IMR-90 (cell line): ENCODE measurements at regions of chr3 and their contacts with region 1.

Region 1: GRCh38 chr3:56042326-56042951 is 425.8 kb downstream of the ERC2 start:
- DNase-seq: peak; percentile 61
- ATAC-seq: peak; percentile 97
- H3K4me3 ChIP-seq: no peak overlapping the region
- H3K27ac ChIP-seq: no peak overlapping the region
- H3K4me1 ChIP-seq: no peaks in the 10 kb centered on the region
- H3K27me3 ChIP-seq: peaks cover 6% of the 10 kb centered on the region
- CTCF ChIP-seq: peak; percentile 58
- POLR2A ChIP-seq: no peak
- RAD21 ChIP-seq: peak; percentile 66

Region 2: DNA sequence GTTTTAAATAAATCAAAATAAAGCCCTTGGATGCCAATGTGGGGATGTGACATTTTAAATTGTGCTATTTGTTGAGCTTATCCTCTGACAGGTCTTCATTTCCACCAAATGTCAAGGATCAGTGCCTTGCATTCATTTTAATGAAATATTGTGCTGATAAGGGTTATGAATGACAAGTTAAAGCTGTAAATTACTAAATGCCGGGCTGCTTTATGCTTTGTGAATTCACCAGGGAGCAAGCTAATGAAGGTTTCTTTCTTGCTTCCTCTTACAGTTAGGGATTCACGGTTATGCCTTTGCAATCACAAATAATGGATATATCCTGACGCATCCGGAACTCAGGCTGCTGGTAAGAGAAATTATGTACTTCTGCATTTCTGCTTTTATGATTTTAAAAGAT is 1196.3 kb before region 1 on chr3:
- CTCF ChIA-PET with region 1: no interaction called
- POLR2A ChIA-PET with region 1: no interaction called
- dilution Hi-C with region 1: no loop called
- in situ Hi-C with region 1: loop called (anchors 10 kb)
- intact Hi-C with region 1: no loop called
- DNase-seq: no peak
- ATAC-seq: no peak
- H3K4me3 ChIP-seq: no peak overlapping the region
- H3K27ac ChIP-seq: no peak overlapping the region
- H3K4me1 ChIP-seq: no peaks in the 10 kb centered on the region
- H3K27me3 ChIP-seq: peaks cover 25% of the 10 kb centered on the region
- CTCF ChIP-seq: no peak
- POLR2A ChIP-seq: no peak
- RAD21 ChIP-seq: no peak

Region 3: DNA sequence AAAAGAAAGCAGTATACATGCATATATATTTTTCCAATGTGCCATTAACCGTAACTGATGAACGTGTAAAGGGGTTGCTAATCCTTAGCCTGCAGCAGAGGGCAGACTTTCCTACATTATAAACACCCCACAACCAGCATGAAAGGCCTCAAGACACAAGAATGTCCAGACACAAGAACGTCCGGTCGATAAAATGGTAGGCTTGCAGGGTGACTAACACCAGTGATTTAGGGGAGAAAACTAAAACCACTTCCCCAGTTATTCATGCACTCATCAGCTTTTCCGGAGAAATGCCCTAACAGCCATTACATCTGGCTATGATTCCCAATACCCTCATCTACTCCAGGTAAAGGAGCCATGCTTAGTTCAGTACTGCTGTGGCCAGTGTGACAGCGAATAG is 1172.0 kb before region 1 on chr3:
- CTCF ChIA-PET with region 1: no interaction called
- POLR2A ChIA-PET with region 1: no interaction called
- dilution Hi-C with region 1: no loop called
- in situ Hi-C with region 1: no loop called
- intact Hi-C with region 1: loop called (anchors 5 kb)
- DNase-seq: peak; percentile 97
- ATAC-seq: peak; percentile 98
- H3K4me3 ChIP-seq: no peak overlapping the region
- H3K27ac ChIP-seq: peak overlapping the region; percentile 70
- H3K4me1 ChIP-seq: peaks cover 3% of the 10 kb centered on the region
- H3K27me3 ChIP-seq: no peaks in the 10 kb centered on the region
- CTCF ChIP-seq: peak; percentile 88
- POLR2A ChIP-seq: peak; percentile 40; the same call in 1 of the 2 replicates
- RAD21 ChIP-seq: peak; percentile 92

Region 4: GRCh38 chr3:55042591-55042990 is 999.8 kb before region 1 on chr3:
- CTCF ChIA-PET with region 1: no interaction called
- POLR2A ChIA-PET with region 1: no interaction called
- dilution Hi-C with region 1: no loop called
- in situ Hi-C with region 1: no loop called
- intact Hi-C with region 1: loop called (anchors 10 kb)
- DNase-seq: peak; percentile 30
- ATAC-seq: peak; percentile 40; the same call in 1 of the 2 replicates
- H3K4me3 ChIP-seq: no peak overlapping the region
- H3K27ac ChIP-seq: no peak overlapping the region
- H3K4me1 ChIP-seq: no peaks in the 10 kb centered on the region
- H3K27me3 ChIP-seq: no peaks in the 10 kb centered on the region
- CTCF ChIP-seq: peak; percentile 41
- POLR2A ChIP-seq: no peak
- RAD21 ChIP-seq: peak; percentile 73

Region 5: GRCh38 chr3:55571913-55572312 is 470.5 kb before region 1 on chr3:
- CTCF ChIA-PET with region 1: no interaction called
- POLR2A ChIA-PET with region 1: no interaction called
- dilution Hi-C with region 1: no loop called
- in situ Hi-C with region 1: no loop called
- intact Hi-C with region 1: no loop called
- DNase-seq: no peak
- ATAC-seq: peak; percentile 61
- H3K4me3 ChIP-seq: no peak overlapping the region
- H3K27ac ChIP-seq: no peak overlapping the region
- H3K4me1 ChIP-seq: peaks cover 5% of the 10 kb centered on the region; the same call in 1 of the 2 replicates
- H3K27me3 ChIP-seq: no peaks in the 10 kb centered on the region
- CTCF ChIP-seq: no peak
- POLR2A ChIP-seq: no peak
- RAD21 ChIP-seq: no peak

Region 6: GRCh38 chr3:55654123-55654760 is 388.2 kb before region 1 on chr3:
- CTCF ChIA-PET with region 1: no interaction called
- POLR2A ChIA-PET with region 1: no interaction called
- dilution Hi-C with region 1: no loop called
- in situ Hi-C with region 1: no loop called
- intact Hi-C with region 1: no loop called
- DNase-seq: no peak
- ATAC-seq: no peak; the same call in 1 of the 2 replicates
- H3K4me3 ChIP-seq: no peak overlapping the region
- H3K27ac ChIP-seq: no peak overlapping the region
- H3K4me1 ChIP-seq: peaks cover 5% of the 10 kb centered on the region; the same call in 1 of the 2 replicates
- H3K27me3 ChIP-seq: no peaks in the 10 kb centered on the region
- CTCF ChIP-seq: no peak
- POLR2A ChIP-seq: no peak
- RAD21 ChIP-seq: no peak

Region 7: GRCh38 chr3:56251343-56251945 is 209.0 kb after region 1 on chr3:
- CTCF ChIA-PET with region 1: interaction called, 4 read pairs
- POLR2A ChIA-PET with region 1: no interaction called
- dilution Hi-C with region 1: no loop called
- in situ Hi-C with region 1: no loop called
- intact Hi-C with region 1: loop called (anchors 2 kb)
- DNase-seq: peak; percentile 51
- ATAC-seq: peak; percentile 79
- H3K4me3 ChIP-seq: no peak overlapping the region
- H3K27ac ChIP-seq: no peak overlapping the region
- H3K4me1 ChIP-seq: no peaks in the 10 kb centered on the region
- H3K27me3 ChIP-seq: peaks cover 2% of the 10 kb centered on the region; the same call in 1 of the 2 replicates
- CTCF ChIP-seq: peak; percentile 79
- POLR2A ChIP-seq: no peak
- RAD21 ChIP-seq: peak; percentile 79

Region 8: GRCh38 chr3:56303487-56303886 is 261.0 kb after region 1 on chr3:
- CTCF ChIA-PET with region 1: no interaction called
- POLR2A ChIA-PET with region 1: no interaction called
- dilution Hi-C with region 1: no loop called
- in situ Hi-C with region 1: no loop called
- intact Hi-C with region 1: no loop called
- DNase-seq: peak; percentile 36
- ATAC-seq: peak; percentile 89
- H3K4me3 ChIP-seq: no peak overlapping the region
- H3K27ac ChIP-seq: no peak overlapping the region
- H3K4me1 ChIP-seq: no peaks in the 10 kb centered on the region
- H3K27me3 ChIP-seq: no peaks in the 10 kb centered on the region
- CTCF ChIP-seq: peak; percentile 48
- POLR2A ChIP-seq: no peak
- RAD21 ChIP-seq: peak; percentile 41